RWPE1 (cell line): ENCODE measurements at regions of chr11 and their contacts with region 1.

Region 1: GRCh38 chr11:111982019-111982464 is 43.2 kb upstream of the DLAT start:
- DNase-seq: peak; percentile 62
- H3K27ac ChIP-seq: no peak overlapping the region
- CTCF ChIP-seq: peak; percentile 78

Region 2: DNA sequence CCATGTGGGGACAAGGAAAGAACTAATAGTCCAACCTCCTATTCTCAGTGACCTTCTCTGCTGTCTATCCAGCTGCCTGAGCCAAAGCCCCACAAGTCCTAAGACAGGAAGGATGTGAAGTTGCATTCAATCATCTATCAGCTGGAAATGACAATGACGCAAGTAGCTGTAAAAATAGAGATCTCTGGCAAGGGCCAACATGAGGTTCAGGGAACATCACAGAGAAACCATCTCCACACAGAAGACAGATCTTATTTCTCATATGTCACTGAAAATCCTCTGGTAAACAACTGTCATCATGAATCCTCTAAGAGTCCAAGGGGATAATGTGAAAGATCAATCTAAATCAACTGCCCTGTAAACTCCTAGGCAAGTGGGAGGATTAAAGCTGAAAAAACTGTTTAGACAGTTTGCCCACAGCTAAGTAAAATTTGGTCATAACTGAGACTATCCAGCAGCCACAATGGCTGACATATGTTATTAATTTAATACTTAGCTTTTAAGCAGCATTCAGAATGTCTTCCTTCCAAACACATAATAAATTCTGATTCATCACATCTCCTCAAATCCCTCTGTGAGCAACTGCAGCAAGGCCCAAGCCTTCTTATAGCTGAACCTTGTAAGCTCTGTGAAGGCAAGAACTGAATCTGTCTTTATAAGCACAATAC is 162.7 kb before region 1 on chr11:
- CTCF ChIA-PET with region 1: no interaction called
- POLR2A ChIA-PET with region 1: no interaction called
- DNase-seq: no peak
- H3K27ac ChIP-seq: no peak overlapping the region
- CTCF ChIP-seq: no peak

Region 3: DNA sequence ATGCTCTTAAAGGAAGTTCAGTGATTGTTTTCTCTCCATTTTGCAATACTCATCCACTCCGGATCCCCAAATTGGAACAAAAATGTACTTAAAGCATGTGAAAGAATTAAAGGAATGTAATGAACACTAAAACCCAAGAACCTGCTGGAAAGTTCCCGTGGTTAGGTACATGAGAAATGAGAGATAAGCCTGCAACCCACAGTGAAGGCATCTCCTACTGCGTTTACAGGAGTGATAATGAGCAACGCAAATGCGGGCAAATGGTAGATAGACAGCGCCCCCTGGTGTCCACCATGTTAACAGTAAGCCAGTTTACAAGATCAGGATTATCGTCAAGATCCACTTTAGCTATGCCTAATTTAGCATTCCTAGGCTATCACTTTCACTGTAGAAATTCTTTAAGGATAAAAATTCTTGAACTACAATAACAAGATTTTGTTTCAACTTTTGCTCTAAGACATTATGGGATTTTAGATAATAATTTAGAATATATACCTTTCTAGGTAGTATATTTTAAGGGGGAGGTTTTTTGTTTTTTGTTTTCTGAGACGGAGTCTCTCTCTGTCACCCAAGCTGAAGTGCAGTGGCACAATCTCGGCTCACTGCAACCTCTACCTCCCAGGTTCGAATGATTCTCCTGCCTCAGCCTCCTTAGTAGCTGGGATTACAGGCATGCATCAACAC is 140.5 kb before region 1 on chr11:
- CTCF ChIA-PET with region 1: no interaction called
- POLR2A ChIA-PET with region 1: no interaction called
- DNase-seq: peak; percentile 66
- H3K27ac ChIP-seq: no peak overlapping the region
- CTCF ChIP-seq: peak; percentile 86

Region 4: GRCh38 chr11:111870886-111871692 is 111.0 kb before region 1 on chr11 and contains the start of gene ALG9:
- CTCF ChIA-PET with region 1: interaction called, 15 read pairs
- POLR2A ChIA-PET with region 1: no interaction called
- DNase-seq: peak; percentile 67
- H3K27ac ChIP-seq: peak within 1 kb of the TSS; percentile 87
- CTCF ChIP-seq: peak; percentile 38

Region 5: GRCh38 chr11:111926505-111927391 is 55.3 kb before region 1 on chr11:
- CTCF ChIA-PET with region 1: interaction called, 24 read pairs
- POLR2A ChIA-PET with region 1: interaction called, 3 read pairs
- DNase-seq: peak; percentile 98
- H3K27ac ChIP-seq: peak overlapping the region; percentile 89
- CTCF ChIP-seq: no peak

Region 6: DNA sequence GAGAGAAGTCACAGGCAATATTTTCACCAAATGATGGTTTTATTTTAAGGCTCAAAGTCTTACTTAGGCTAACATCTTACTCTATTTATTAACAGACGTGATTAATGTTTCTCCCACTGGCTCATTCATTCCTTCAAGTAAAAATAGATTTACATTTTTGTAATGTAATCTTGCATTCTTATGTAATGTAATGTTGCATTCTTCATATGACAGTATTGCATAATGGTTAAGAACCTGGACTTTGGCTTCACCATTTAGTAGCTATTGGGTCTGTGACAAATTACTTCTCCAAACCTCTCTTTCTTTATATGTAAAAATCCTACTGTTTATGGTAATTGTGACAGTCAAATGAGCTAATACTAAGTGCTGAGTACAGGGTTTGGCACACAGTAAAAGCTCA is 48.2 kb before region 1 on chr11:
- CTCF ChIA-PET with region 1: interaction called, 24 read pairs
- POLR2A ChIA-PET with region 1: no interaction called
- DNase-seq: no peak
- H3K27ac ChIP-seq: no peak overlapping the region
- CTCF ChIP-seq: no peak

Region 7: DNA sequence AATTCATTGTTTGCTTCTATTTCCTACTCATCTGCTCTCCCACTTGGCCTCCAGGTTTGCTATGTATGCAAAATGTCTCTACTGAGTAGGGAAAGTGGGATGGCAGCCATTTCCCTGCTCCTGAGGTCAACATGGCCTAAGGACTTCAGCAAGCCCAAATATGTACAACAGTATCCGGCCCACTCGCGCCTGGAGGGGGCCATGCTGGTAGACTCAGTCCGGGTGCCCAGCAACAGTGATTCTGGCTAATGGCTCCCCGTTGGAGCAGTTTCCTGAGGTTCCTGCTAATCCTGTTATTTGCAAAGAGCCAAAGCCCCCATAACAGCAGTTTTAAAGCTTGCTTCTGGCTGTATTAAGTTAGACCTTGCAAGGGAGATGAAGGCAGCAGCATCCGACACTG is 725.6 kb after region 1 on chr11:
- CTCF ChIA-PET with region 1: no interaction called
- POLR2A ChIA-PET with region 1: no interaction called
- DNase-seq: no peak
- H3K27ac ChIP-seq: no peak overlapping the region
- CTCF ChIP-seq: no peak